SK-N-SH (cell line): ENCODE measurements at regions of chr22 and their contacts with region 1.

Region 1: DNA sequence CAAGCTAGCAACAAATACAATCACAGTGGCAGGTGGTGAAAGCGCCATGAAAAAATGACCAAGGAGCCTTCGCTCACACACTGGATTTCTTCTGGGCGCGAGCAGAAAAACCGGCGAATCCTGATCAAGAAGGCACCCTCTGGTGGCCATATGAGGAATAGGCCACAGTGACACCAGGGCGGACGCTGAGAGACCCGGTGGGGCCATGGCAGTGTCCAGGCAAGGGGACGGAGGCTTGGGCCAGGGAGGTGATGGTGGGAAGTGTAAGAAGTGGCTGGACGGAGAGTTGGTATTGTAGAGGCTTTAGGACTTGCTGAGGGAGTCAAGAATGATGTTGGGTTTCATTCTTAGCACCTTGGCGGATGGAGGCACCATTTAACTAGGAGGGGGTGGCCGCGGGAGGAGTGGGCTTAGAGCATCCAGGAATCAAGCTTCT is 16.9 kb upstream of the RAC2 start:
- DNase-seq: peak; percentile 84
- H3K4me3 ChIP-seq: peak overlapping the region in 1 of 2 experiments; percentile 16; a peak in 2 of 4 replicates
- H3K27ac ChIP-seq: no peak overlapping the region
- H3K4me1 ChIP-seq: peaks cover 2 to 3% of the 10 kb centered on the region in 2 experiments; a peak in 1 of 4 replicates
- H3K27me3 ChIP-seq: no peaks in the 10 kb centered on the region
- CTCF ChIP-seq: peak; percentile 91
- EP300 ChIP-seq: no peak
- RAD21 ChIP-seq: peak; percentile 68

Region 2: GRCh38 chr22:37088108-37088605 is 172.8 kb before region 1 on chr22:
- CTCF ChIA-PET with region 1: no interaction called
- POLR2A ChIA-PET with region 1: no interaction called
- DNase-seq: no peak
- H3K4me3 ChIP-seq: no peak overlapping the region
- H3K27ac ChIP-seq: no peak overlapping the region
- H3K4me1 ChIP-seq: peaks cover 0 to 7% of the 10 kb centered on the region in 2 experiments; a peak in 1 of 4 replicates
- H3K27me3 ChIP-seq: no peaks in the 10 kb centered on the region
- CTCF ChIP-seq: no peak
- EP300 ChIP-seq: no peak
- RAD21 ChIP-seq: no peak

Region 3: DNA sequence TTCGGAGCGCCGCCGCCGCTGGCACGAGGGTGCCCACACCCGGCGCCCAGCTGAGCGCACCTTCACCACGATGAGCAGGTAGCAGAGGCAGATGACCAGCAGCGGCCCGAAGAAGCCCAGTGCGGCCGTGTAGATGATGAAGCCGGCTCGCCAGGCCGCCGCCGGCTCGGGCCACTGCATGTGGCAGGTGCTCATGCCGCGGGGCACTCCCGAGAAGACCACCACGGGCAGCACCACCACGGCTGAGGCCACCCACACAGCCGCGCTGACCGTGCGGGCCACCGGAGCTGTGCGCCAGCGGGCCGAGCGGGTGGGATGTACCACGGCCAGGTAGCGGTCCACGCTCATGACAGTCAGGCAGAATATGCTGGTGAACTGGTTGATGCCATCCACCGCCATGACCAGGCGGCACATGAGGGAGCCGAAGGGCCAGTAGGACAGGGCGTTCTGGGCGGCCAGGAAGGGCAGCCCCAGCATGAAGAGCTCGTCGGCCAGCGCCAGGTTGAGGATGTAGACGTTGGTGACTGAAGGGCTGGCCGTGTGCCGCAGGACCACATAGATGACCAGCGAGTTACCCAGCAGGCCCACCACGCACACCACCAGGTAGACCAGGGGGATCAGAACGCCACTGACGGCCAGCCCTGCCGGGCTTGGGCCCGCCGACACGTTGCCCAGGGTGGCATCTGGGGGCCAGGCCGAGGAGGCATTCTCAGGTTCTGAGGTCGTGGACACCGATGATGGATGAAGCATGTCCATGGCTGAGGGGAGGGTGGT is 53.7 kb before region 1 on chr22:
- CTCF ChIA-PET with region 1: interaction called, 26 read pairs
- POLR2A ChIA-PET with region 1: no interaction called
- DNase-seq: no peak
- H3K4me3 ChIP-seq: no peak overlapping the region
- H3K27ac ChIP-seq: no peak overlapping the region
- H3K4me1 ChIP-seq: peaks cover 0 to 5% of the 10 kb centered on the region in 2 experiments; a peak in 1 of 4 replicates
- H3K27me3 ChIP-seq: no peaks in the 10 kb centered on the region
- CTCF ChIP-seq: no peak
- EP300 ChIP-seq: no peak
- RAD21 ChIP-seq: no peak

Region 4: GRCh38 chr22:37212167-37212906 is 48.6 kb before region 1 on chr22 and contains the start of gene SSTR3:
- CTCF ChIA-PET with region 1: interaction called, 26 read pairs
- POLR2A ChIA-PET with region 1: no interaction called
- DNase-seq: peak; percentile 84
- H3K4me3 ChIP-seq: no peak within 1 kb of the TSS
- H3K27ac ChIP-seq: no peak within 1 kb of the TSS
- H3K4me1 ChIP-seq: peaks cover 0 to 10% of the 10 kb centered on the region in 2 experiments; a peak in 1 of 4 replicates
- H3K27me3 ChIP-seq: no peaks in the 10 kb centered on the region; the same call in 1 of the 2 replicates
- CTCF ChIP-seq: no peak
- EP300 ChIP-seq: no peak
- RAD21 ChIP-seq: no peak
- polyA plus RNA-seq, gene SSTR3: 0.02 TPM in 1 of 2 replicates, not detected in the other

Region 5: DNA sequence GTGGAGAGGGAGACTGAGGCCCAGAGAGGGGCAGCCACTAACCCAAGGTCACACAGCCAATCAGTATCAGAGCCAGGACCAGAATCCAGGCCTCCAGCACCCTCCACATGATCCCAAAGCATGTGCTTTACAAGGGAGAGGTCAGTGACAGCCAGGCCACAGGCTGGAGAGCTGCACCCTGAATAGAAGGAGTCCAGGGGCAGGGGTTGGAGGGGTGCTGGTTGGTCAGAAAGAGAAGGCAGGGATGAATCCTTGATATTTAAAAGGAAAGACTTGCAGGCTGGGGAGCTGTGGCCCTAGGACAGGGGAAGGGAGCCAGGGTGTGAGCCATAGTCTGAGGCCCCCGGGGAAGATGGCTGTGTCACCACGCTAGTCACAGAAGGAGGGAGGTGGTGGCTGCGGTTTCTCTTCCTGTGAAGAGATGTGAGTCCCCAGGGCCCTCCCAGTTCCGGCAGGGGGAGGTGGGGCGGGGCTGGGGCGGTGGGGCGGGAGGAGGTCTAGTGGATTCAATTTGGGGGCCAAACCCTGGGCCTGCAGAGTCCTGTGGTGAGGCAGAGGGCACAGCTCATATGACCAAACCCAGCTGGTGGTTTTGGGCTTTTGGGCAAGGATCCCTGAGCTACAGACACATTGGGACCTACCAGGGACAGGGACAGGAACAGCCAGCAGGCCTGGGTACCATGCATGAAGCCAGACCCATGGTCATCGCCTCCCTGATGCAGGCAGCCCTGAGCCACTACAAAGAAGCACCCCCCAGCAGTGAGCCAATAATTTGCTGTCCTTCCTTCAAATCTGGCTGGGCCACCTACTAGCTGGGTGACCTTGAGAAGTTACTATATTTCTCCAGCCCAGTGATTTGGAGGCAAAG is 30.9 kb before region 1 on chr22:
- CTCF ChIA-PET with region 1: interaction called, 52 read pairs
- POLR2A ChIA-PET with region 1: no interaction called
- DNase-seq: no peak
- H3K4me3 ChIP-seq: no peak overlapping the region
- H3K27ac ChIP-seq: peak overlapping the region in 1 of 2 experiments; percentile 83; a peak in 2 of 4 replicates
- H3K4me1 ChIP-seq: peaks cover 15 to 22% of the 10 kb centered on the region in 2 experiments; a peak in 3 of 4 replicates
- H3K27me3 ChIP-seq: no peaks in the 10 kb centered on the region
- CTCF ChIP-seq: no peak
- EP300 ChIP-seq: no peak
- RAD21 ChIP-seq: no peak

Region 6: GRCh38 chr22:37244114-37244921 is 16.6 kb before region 1 on chr22 and contains the start of gene RAC2:
- CTCF ChIA-PET with region 1: interaction called, 124 read pairs
- POLR2A ChIA-PET with region 1: interaction called, 5 read pairs
- DNase-seq: peak; percentile 57
- H3K4me3 ChIP-seq: peak within 1 kb of the TSS in 1 of 2 experiments; percentile 38; a peak in 2 of 4 replicates
- H3K27ac ChIP-seq: no peak within 1 kb of the TSS
- H3K4me1 ChIP-seq: peaks cover 7 to 11% of the 10 kb centered on the region in 2 experiments; a peak in 3 of 4 replicates
- H3K27me3 ChIP-seq: no peaks in the 10 kb centered on the region
- CTCF ChIP-seq: no peak
- EP300 ChIP-seq: no peak
- RAD21 ChIP-seq: no peak
- polyA plus RNA-seq, gene RAC2: 22.6 and 29.9 TPM in 2 replicates

Region 7: GRCh38 chr22:37282385-37282677 is 21.4 kb after region 1 on chr22 and contains the start of gene CYTH4:
- CTCF ChIA-PET with region 1: interaction called, 49 read pairs
- POLR2A ChIA-PET with region 1: no interaction called
- DNase-seq: no peak
- H3K4me3 ChIP-seq: no peak within 1 kb of the TSS
- H3K27ac ChIP-seq: no peak within 1 kb of the TSS
- H3K4me1 ChIP-seq: no peaks in the 10 kb centered on the region
- H3K27me3 ChIP-seq: no peaks in the 10 kb centered on the region
- CTCF ChIP-seq: no peak
- EP300 ChIP-seq: no peak
- RAD21 ChIP-seq: no peak
- polyA plus RNA-seq, gene CYTH4: 0.03 and 0.07 TPM in 2 replicates

Region 8: DNA sequence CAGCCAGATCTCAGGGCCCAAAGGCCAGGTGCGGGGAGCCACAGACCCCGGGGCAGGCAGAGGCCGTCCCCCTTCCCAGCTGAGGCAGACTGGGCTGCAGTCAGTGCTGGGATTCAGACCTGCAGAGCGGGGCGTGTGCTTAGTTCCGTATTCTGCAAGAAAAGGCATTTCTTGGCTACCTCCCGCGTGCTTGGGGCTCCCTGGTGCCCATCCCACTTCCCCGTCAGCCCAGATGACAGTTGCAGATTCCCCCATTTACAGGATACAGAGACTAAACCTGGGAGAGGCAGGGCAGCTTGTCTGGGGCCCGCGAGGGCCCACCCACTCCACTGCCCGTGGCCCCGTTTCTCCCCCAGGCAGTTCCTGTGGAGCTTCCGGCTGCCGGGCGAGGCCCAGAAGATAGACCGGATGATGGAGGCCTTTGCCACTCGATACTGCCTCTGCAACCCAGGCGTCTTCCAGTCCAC is 39.7 kb after region 1 on chr22:
- CTCF ChIA-PET with region 1: interaction called, 16 read pairs
- POLR2A ChIA-PET with region 1: no interaction called
- DNase-seq: no peak
- H3K4me3 ChIP-seq: no peak overlapping the region
- H3K27ac ChIP-seq: no peak overlapping the region
- H3K4me1 ChIP-seq: peaks cover 3 to 15% of the 10 kb centered on the region in 2 experiments; a peak in 3 of 4 replicates
- H3K27me3 ChIP-seq: no peaks in the 10 kb centered on the region
- CTCF ChIP-seq: no peak
- EP300 ChIP-seq: no peak
- RAD21 ChIP-seq: no peak